Naive thymus-derived CD4-positive, alpha-beta T cell (primary cell): ENCODE measurements at regions of chr11 and their contacts with region 1.

Region 1: GRCh38 chr11:10857709-10858438 is at the start of gene ZBED5:
- DNase-seq: peak; percentile 93 to 97 (median 96)
- ATAC-seq: peak; percentile 94
- H3K4me3 ChIP-seq: peak within 1 kb of the TSS; percentile 91
- H3K4me3 Mint-ChIP-seq: peak within 1 kb of the TSS; percentile 94 to 100 (median 99)
- H3K27ac ChIP-seq: peak within 1 kb of the TSS; percentile 91
- H3K27ac Mint-ChIP-seq: peak within 1 kb of the TSS; percentile 98 to 100 (median 100)
- H3K4me1 ChIP-seq: peaks cover 5 to 9% of the 10 kb centered on the region in 2 donors
- H3K4me1 Mint-ChIP-seq: peaks cover 20 to 73% (median 60%) of the 10 kb centered on the region in 7 donors
- H3K27me3 ChIP-seq: no peaks in the 10 kb centered on the region
- H3K27me3 Mint-ChIP-seq: peaks cover 0 to 2% (median 0%) of the 10 kb centered on the region in 5 donors
- total RNA-seq, gene ZBED5: 56.7 to 146 (median 94.0) TPM

Region 2: DNA sequence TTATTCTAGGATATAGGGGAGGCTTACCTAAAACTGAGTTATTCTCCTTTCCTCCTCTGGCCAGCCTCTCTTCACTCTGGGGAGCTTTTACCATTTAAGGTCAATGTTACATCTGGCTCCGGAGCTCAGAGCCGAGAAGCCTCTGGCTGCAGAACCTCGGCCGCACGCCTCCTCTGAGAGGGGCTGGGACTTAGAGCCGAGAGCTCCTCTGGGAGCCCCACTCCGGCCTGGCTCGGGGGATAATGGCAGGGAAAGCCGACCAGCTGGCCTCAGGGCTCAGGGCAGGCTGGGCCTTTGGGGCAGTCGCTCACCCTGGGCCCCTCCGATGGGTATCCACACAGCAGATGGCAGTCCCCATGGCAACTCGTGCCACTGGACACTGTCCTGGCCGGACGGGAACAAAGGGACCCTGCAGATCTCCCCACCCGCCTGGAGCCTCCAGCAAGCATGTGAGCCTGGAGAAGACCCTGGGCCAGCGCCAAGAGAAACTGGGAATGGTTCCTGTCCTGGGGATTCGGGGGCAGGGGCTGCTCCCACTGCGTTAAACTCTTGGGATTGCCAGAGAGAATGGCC is 164.3 kb before region 1 on chr11 and contains the start of gene IRAG1:
- CTCF ChIA-PET with region 1: no interaction called
- POLR2A ChIA-PET with region 1: no interaction called
- intact Hi-C with region 1: no loop called
- DNase-seq: no peak
- ATAC-seq: no peak
- H3K4me3 ChIP-seq: no peak within 1 kb of the TSS
- H3K4me3 Mint-ChIP-seq: no peak within 1 kb of the TSS
- H3K27ac ChIP-seq: no peak within 1 kb of the TSS
- H3K27ac Mint-ChIP-seq: no peak within 1 kb of the TSS
- H3K4me1 ChIP-seq: no peaks in the 10 kb centered on the region
- H3K4me1 Mint-ChIP-seq: peaks cover 0 to 6% (median 0%) of the 10 kb centered on the region in 7 donors
- H3K27me3 ChIP-seq: no peaks in the 10 kb centered on the region
- H3K27me3 Mint-ChIP-seq: peaks cover 0 to 36% (median 15%) of the 10 kb centered on the region in 5 donors
- total RNA-seq, gene IRAG1: 0.11 to 1.4 TPM in 2 of 5 experiments, not detected in the others

Region 3: DNA sequence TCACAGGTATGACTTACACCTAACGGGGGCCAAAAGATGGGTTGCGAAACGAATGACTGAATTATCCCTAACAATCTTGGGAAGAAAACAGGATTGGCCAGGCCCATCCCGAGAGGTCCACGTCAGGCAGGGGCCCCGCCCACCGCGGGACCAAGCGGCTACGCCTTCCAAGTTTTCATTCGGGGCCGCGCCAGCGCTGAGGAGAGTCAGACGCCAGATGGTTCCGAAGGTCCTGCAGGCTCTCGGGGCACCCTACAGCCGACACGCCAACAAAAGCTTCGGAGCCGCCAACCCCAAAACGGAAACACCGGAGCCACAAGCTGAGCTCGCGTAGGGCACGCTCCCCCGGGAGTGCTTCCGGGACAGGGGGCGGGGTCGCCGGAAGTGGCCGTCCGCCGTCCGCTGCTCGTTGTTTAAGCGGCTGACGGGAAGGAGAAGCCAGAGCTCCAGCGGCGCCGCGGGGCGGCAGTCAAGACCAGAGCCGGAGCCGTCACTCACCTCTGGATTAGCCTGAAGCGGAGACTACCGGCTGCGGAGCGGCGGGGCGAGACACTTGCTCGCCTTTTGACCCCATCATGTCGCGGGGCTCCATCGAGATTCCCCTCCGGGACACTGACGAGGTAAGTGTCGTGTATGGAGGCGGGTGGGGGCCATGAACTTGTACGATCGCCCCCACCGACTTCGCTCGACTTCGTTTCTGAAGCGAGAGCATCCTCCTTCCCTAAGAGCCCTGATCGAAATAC is 106.9 kb before region 1 on chr11 and contains the start of gene CTR9:
- CTCF ChIA-PET with region 1: interaction called, 3 read pairs
- POLR2A ChIA-PET with region 1: interaction called, 13 read pairs
- intact Hi-C with region 1: loop called (anchors 1 kb)
- DNase-seq: peak; percentile 78 to 94 (median 88)
- ATAC-seq: peak; percentile 96
- H3K4me3 ChIP-seq: peak within 1 kb of the TSS; percentile 79
- H3K4me3 Mint-ChIP-seq: peak within 1 kb of the TSS; percentile 95 to 99 (median 97)
- H3K27ac ChIP-seq: peak within 1 kb of the TSS; percentile 85
- H3K27ac Mint-ChIP-seq: peak within 1 kb of the TSS; percentile 90 to 96 (median 91)
- H3K4me1 ChIP-seq: peaks cover 7 to 8% of the 10 kb centered on the region in 2 donors
- H3K4me1 Mint-ChIP-seq: peaks cover 12 to 36% (median 31%) of the 10 kb centered on the region in 7 donors
- H3K27me3 ChIP-seq: no peaks in the 10 kb centered on the region
- H3K27me3 Mint-ChIP-seq: no peaks in the 10 kb centered on the region
- total RNA-seq, gene CTR9: 23.8 to 64.0 (median 47.8) TPM

Region 4: GRCh38 chr11:10803676-10804075 is 54.2 kb before region 1 on chr11:
- CTCF ChIA-PET with region 1: interaction called, 10 read pairs
- POLR2A ChIA-PET with region 1: interaction called, 416 read pairs
- intact Hi-C with region 1: loop called (anchors 1 kb)
- DNase-seq: no peak
- ATAC-seq: no peak
- H3K4me3 ChIP-seq: no peak overlapping the region
- H3K4me3 Mint-ChIP-seq: peak overlapping the region in 3 of 10 donors; percentile 4 to 27 (median 15)
- H3K27ac ChIP-seq: peak overlapping the region; percentile 8
- H3K27ac Mint-ChIP-seq: peak overlapping the region in 8 of 9 donors; percentile 13 to 95 (median 62)
- H3K4me1 ChIP-seq: peaks cover 59 to 63% of the 10 kb centered on the region in 2 donors
- H3K4me1 Mint-ChIP-seq: peaks cover 50 to 89% (median 77%) of the 10 kb centered on the region in 7 donors
- H3K27me3 ChIP-seq: no peaks in the 10 kb centered on the region
- H3K27me3 Mint-ChIP-seq: no peaks in the 10 kb centered on the region

Region 5: GRCh38 chr11:10824888-10825287 is 33.0 kb before region 1 on chr11:
- CTCF ChIA-PET with region 1: no interaction called
- POLR2A ChIA-PET with region 1: interaction called, 16 read pairs
- intact Hi-C with region 1: no loop called
- DNase-seq: no peak
- ATAC-seq: peak; percentile 63
- H3K4me3 ChIP-seq: no peak overlapping the region
- H3K4me3 Mint-ChIP-seq: peak overlapping the region in 6 of 10 donors; percentile 12 to 66 (median 20)
- H3K27ac ChIP-seq: no peak overlapping the region
- H3K27ac Mint-ChIP-seq: peak overlapping the region in 3 of 9 donors; percentile 44 to 74 (median 50)
- H3K4me1 ChIP-seq: no peaks in the 10 kb centered on the region
- H3K4me1 Mint-ChIP-seq: peaks cover 2 to 19% (median 8%) of the 10 kb centered on the region in 7 donors
- H3K27me3 ChIP-seq: no peaks in the 10 kb centered on the region
- H3K27me3 Mint-ChIP-seq: no peaks in the 10 kb centered on the region

Region 6: DNA sequence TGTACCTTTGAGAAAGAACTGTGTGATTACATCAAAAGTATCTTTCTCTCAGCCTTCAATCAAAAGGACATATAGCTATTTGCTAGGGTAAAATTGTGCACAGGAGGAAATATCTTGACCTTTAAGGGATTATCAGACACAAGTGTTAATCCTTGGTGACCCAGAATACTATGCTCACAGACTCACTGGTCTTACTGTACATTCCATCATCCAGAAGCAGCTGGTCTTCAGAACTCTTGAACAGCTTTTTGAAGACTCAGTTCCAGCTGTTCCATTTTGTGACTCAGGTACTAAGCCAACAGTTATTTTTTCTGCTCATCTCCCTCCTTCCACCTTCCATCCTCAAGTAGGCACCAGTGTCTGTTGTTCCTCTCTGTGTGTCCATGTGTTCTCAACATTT is 19.8 kb before region 1 on chr11:
- CTCF ChIA-PET with region 1: interaction called, 3 read pairs
- POLR2A ChIA-PET with region 1: interaction called, 17 read pairs
- intact Hi-C with region 1: no loop called
- DNase-seq: no peak
- ATAC-seq: no peak
- H3K4me3 ChIP-seq: no peak overlapping the region
- H3K4me3 Mint-ChIP-seq: no peak overlapping the region
- H3K27ac ChIP-seq: no peak overlapping the region
- H3K27ac Mint-ChIP-seq: no peak overlapping the region
- H3K4me1 ChIP-seq: no peaks in the 10 kb centered on the region
- H3K4me1 Mint-ChIP-seq: peaks cover 3 to 9% (median 5%) of the 10 kb centered on the region in 7 donors
- H3K27me3 ChIP-seq: no peaks in the 10 kb centered on the region
- H3K27me3 Mint-ChIP-seq: no peaks in the 10 kb centered on the region

Region 7: GRCh38 chr11:10878408-10879214 is 20.7 kb after region 1 on chr11:
- CTCF ChIA-PET with region 1: interaction called, 8 read pairs
- POLR2A ChIA-PET with region 1: interaction called, 29 read pairs
- intact Hi-C with region 1: loop called (anchors 1 kb)
- DNase-seq: peak in 7 of 9 donors; percentile 52 to 69 (median 62)
- ATAC-seq: peak; percentile 89
- H3K4me3 ChIP-seq: no peak overlapping the region
- H3K4me3 Mint-ChIP-seq: no peak overlapping the region
- H3K27ac ChIP-seq: no peak overlapping the region
- H3K27ac Mint-ChIP-seq: peak overlapping the region in 8 of 9 donors; percentile 16 to 75 (median 50)
- H3K4me1 ChIP-seq: peaks cover 5 to 6% of the 10 kb centered on the region in 2 donors
- H3K4me1 Mint-ChIP-seq: peaks cover 7 to 27% (median 23%) of the 10 kb centered on the region in 7 donors
- H3K27me3 ChIP-seq: no peaks in the 10 kb centered on the region
- H3K27me3 Mint-ChIP-seq: no peaks in the 10 kb centered on the region

Region 8: DNA sequence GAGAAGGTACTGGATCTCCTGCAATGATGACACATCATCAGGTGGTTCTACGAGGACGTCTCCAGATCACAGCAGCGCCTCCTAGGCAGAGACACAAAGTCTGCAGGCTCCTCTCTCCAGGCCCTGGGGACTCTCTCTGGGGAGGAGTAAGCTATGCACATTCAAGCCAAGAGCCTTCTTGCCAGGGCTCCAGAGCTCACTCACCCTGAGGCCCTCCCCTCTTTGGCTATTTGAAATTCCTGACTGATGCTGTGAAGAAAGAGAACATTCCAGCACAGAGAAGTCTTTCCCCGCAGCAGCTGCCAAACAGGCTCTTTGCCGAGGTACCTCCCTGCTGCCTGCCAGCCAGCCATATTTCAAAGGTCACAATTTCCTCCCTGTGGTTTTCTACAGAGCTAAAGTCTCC is 290.2 kb after region 1 on chr11:
- CTCF ChIA-PET with region 1: no interaction called
- POLR2A ChIA-PET with region 1: no interaction called
- intact Hi-C with region 1: loop called in 1 of 2 experiments (anchors 2 kb)
- DNase-seq: peak in 7 of 9 donors; percentile 29 to 43 (median 35)
- ATAC-seq: no peak
- H3K4me3 ChIP-seq: no peak overlapping the region
- H3K4me3 Mint-ChIP-seq: peak overlapping the region in 9 of 10 donors; percentile 20 to 84 (median 70)
- H3K27ac ChIP-seq: peak overlapping the region; percentile 87
- H3K27ac Mint-ChIP-seq: peak overlapping the region in 8 of 9 donors; percentile 93 to 99 (median 98)
- H3K4me1 ChIP-seq: peaks cover 31 to 61% of the 10 kb centered on the region in 2 donors
- H3K4me1 Mint-ChIP-seq: peaks cover 32 to 74% (median 70%) of the 10 kb centered on the region in 7 donors
- H3K27me3 ChIP-seq: no peaks in the 10 kb centered on the region
- H3K27me3 Mint-ChIP-seq: peaks cover 0 to 2% (median 0%) of the 10 kb centered on the region in 5 donors